ENCODE measurements at regions of chr7 and their contacts with region 1.

Region 1: GRCh38 chr7:150368096-150368883 is at the start of gene REPIN1:
- DNase-seq: peak; percentile 66 to 85 (median 72)
- H3K4me3 ChIP-seq: peak within 1 kb of the TSS; percentile 58 to 91 (median 73)
- H3K4me3 Mint-ChIP-seq: peak within 1 kb of the TSS; percentile 95 to 97
- H3K27ac ChIP-seq: peak within 1 kb of the TSS; percentile 83 to 95
- H3K27ac Mint-ChIP-seq: peak within 1 kb of the TSS; percentile 91 to 98 (median 95)
- H3K4me1 ChIP-seq: peaks cover 61 to 75% of the 10 kb centered on the region in 2 donors
- H3K4me1 Mint-ChIP-seq: peaks cover 64% of the 10 kb centered on the region
- H3K27me3 ChIP-seq: no peaks in the 10 kb centered on the region
- H3K27me3 Mint-ChIP-seq: no peaks in the 10 kb centered on the region
- CTCF ChIP-seq: no peak
- polyA plus RNA-seq, gene REPIN1: 32.7 to 42.9 (median 39.0) TPM

Region 2: GRCh38 chr7:149843566-149843965 is 524.7 kb before region 1 on chr7:
- intact Hi-C with region 1: loop called in 1 of 2 experiments (anchors 5 kb)
- DNase-seq: no peak
- H3K4me3 ChIP-seq: no peak overlapping the region
- H3K4me3 Mint-ChIP-seq: no peak overlapping the region
- H3K27ac ChIP-seq: no peak overlapping the region
- H3K27ac Mint-ChIP-seq: peak overlapping the region in 1 of 7 donors; percentile 18
- H3K4me1 ChIP-seq: peaks cover 19 to 28% of the 10 kb centered on the region in 2 donors
- H3K4me1 Mint-ChIP-seq: peaks cover 29% of the 10 kb centered on the region
- H3K27me3 ChIP-seq: no peaks in the 10 kb centered on the region
- H3K27me3 Mint-ChIP-seq: no peaks in the 10 kb centered on the region
- CTCF ChIP-seq: no peak

Region 3: GRCh38 chr7:150378853-150379440 is 10.7 kb after region 1 on chr7 and contains the start of gene ZNF775:
- intact Hi-C with region 1: loop called in 1 of 2 experiments (anchors 1 kb)
- DNase-seq: peak; percentile 90 to 97 (median 91)
- H3K4me3 ChIP-seq: peak within 1 kb of the TSS; percentile 83 to 96 (median 84)
- H3K4me3 Mint-ChIP-seq: peak within 1 kb of the TSS; percentile 90 to 93
- H3K27ac ChIP-seq: peak within 1 kb of the TSS; percentile 70 to 77
- H3K27ac Mint-ChIP-seq: peak within 1 kb of the TSS; percentile 71 to 85 (median 79)
- H3K4me1 ChIP-seq: peaks cover 34 to 39% of the 10 kb centered on the region in 2 donors
- H3K4me1 Mint-ChIP-seq: peaks cover 45% of the 10 kb centered on the region
- H3K27me3 ChIP-seq: no peaks in the 10 kb centered on the region
- H3K27me3 Mint-ChIP-seq: peaks cover 0 to 1% (median 0%) of the 10 kb centered on the region in 3 donors
- CTCF ChIP-seq: no peak
- polyA plus RNA-seq, gene ZNF775: 1.3 to 2.7 (median 1.4) TPM

Measured in CD14-positive monocyte (primary cell).